HEK293T (cell line): ENCODE measurements at regions of chrX and their contacts with region 1.

Region 1: GRCh38 chrX:101390664-101391525 is at the start of gene RPL36A:
- DNase-seq: peak; percentile 92

Region 2: DNA sequence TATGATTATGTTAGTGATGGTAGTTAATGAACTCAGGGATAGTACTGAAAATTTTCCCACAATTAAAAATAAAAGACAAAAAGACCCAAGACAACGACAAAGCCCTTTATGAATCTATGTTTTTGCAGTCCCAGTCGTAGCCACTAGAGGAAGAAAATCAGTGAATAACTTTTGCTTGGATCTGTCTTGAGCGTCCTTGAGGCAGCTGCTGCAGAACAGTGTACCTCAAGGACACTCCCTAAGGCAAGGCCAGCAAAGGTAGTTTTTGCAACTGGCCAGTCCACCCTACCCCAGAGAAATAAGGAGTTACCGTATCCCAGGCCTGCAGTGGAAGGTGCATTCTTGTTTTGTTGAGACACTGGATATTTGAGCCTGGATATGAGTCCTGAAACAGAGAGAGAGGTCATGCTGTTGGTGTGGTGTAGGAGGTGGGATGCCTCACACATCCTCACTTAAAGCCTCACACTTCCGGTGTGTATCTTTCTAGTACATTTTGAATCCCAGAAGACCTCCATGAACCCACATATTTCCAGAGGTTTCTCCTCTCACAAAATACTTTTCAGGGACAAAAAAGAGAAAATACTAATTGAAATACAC is 33.6 kb before region 1 on chrX:
- CTCF ChIA-PET with region 1: interaction called, 7 read pairs
- POLR2A ChIA-PET with region 1: interaction called, 16 read pairs
- DNase-seq: peak; percentile 59

Region 3: DNA sequence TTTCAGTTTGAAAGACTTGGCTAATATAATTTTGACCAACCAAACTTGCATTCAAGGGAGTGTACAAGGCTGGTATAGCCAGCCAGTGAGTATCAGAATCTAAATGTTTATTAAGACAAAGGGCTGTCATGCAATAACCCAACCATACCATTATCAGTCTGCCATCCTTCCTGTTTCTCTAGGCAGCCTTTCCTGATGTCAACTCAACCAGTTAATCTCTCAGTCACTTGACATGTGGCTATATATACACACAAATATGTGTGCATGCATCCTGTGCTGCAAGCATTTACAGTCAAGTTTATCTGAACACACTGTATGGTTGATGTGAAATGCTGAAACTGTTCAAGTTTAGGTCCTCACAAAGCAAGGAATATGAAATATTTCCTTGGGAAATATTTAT is 22.1 kb before region 1 on chrX:
- CTCF ChIA-PET with region 1: no interaction called
- POLR2A ChIA-PET with region 1: interaction called, 31 read pairs
- DNase-seq: no peak

Region 4: GRCh38 chrX:101407748-101408531 is 17.0 kb after region 1 on chrX and contains the starts of genes GLA and HNRNPH2:
- CTCF ChIA-PET with region 1: no interaction called
- POLR2A ChIA-PET with region 1: interaction called, 22 read pairs
- DNase-seq: peak; percentile 90